Pancreas (tissue), 10 donors: ENCODE measurements at regions of chr20 and their contacts with region 1.

Region 1: DNA sequence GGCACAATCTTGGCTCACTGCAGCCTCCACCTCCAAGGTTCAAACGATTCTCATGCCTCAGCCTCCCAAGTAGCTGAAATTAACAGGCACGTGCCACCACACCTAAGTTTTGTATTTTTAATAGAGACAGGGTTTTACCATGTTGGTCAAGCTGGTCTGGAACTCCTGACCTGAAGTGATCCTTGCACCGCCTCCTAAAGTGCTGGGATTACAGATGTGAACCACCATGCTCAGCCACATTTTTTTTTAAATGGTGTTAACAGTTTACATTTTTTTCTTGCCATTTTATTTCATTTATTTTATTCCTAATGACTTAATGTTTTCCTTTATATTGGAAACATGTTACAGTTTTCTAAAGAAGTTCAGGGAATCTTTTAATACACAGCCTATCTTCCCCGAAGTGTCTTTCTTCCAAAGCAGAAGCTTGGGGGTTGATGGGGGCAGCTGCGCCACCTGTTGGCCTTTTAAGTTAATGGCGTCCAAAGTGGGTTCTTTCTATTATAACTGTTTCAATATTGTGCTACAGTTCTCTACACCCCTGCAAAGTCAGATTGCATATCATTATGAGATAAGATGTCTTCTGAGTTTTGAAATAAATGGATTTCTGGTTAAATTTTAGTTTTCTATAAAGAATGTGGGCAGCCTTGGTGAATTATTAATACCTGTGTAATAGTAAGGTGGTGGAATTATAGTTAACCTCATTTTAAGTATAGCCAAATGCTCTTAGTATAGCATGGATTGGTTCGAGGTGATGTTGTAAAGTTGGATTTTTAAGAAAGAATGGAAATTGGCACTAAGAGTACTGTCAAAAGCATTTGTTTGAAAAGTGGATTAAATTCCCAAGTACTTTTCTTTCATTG is 42.0 kb upstream of the PLCG1 start:
- DNase-seq: peak in 3 of 6 donors; percentile 10 to 68 (median 52)
- ATAC-seq: peak in 3 of 4 donors; percentile 82 to 89 (median 87)
- H3K4me3 ChIP-seq: no peak overlapping the region
- H3K27ac ChIP-seq: no peak overlapping the region
- H3K4me1 ChIP-seq: peaks cover 0 to 8% (median 3%) of the 10 kb centered on the region in 3 donors
- H3K27me3 ChIP-seq: no peaks in the 10 kb centered on the region
- CTCF ChIP-seq: peak; percentile 28 to 75 (median 55)

Region 2: GRCh38 chr20:40990542-40991120 is 104.7 kb before region 1 on chr20:
- intact Hi-C with region 1: loop called in 2 of 3 experiments (anchors 5 to 10 kb)
- DNase-seq: peak; percentile 59 to 87 (median 74)
- ATAC-seq: peak; percentile 99 to 100 (median 99)
- H3K4me3 ChIP-seq: no peak overlapping the region
- H3K27ac ChIP-seq: no peak overlapping the region
- H3K4me1 ChIP-seq: no peaks in the 10 kb centered on the region
- H3K27me3 ChIP-seq: no peaks in the 10 kb centered on the region
- CTCF ChIP-seq: peak; percentile 37 to 66 (median 62)

Region 3: DNA sequence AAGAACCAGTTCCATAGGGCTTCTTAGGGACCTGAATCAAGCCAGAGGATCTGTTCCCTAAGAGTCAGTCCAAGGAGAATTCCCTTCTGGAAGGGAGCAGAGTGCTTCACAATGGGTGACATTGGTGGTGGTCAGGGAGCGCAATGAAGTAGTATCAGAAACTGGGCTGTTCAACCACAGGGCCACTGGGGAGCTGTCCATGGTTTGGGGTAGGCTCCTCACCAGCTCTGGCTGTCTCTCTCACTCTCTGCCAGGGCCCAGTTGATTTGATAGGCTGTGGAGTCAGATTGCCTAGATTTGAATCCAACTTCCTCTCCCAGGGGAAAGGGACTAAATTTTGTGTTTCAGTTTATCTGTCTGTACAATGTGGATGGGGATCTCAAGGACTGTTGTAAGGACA is 559.5 kb after region 1 on chr20:
- intact Hi-C with region 1: no loop called
- DNase-seq: no peak
- ATAC-seq: peak in 1 of 4 donors; percentile 54
- H3K4me3 ChIP-seq: no peak overlapping the region
- H3K27ac ChIP-seq: no peak overlapping the region
- H3K4me1 ChIP-seq: peaks cover 0 to 14% (median 0%) of the 10 kb centered on the region in 3 donors
- H3K27me3 ChIP-seq: no peaks in the 10 kb centered on the region
- CTCF ChIP-seq: no peak